CD4-positive, alpha-beta memory T cell (primary cell): ENCODE measurements at regions of chr14 and their contacts with region 1.

Region 1: DNA sequence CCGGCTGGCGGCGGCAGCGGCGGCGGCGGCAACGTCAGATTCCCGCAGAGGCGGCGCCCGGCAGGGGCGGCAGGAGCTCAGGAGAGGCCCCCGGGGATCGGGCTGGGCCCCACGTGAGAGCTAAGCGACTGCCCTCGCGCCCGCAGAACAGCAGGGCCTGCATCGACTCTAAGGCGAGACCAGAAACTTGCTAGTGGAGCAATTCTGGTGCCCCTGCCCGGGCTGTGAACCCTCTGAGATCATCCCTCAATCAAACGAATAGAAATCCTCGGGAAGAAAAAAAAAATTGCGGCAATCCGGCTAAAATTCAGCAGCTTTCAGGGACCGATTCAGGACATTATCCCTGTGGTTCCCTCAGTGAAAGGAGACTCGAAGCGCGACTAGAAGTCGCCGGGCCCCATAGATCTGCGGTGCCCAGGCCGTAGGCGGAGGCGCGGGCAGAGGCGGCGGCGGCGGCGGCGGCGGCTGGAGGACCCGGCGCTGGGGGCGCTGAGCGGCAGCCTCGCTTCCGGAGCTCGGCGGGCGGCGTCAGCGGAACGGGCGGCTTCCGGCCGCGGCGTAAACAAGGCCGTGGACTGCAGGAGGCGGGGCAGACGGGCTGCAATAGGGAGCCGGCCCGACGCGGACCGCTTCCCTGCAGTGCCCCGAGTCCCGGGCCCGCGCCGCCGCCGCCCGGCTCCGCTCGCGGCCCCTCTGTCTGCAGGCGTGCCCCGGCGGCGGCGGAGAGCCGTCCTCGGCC is at the start of gene KLHDC2:
- DNase-seq: peak; percentile 87 to 90 (median 89)
- H3K4me3 ChIP-seq: peak within 1 kb of the TSS; percentile 81 to 97
- H3K4me3 Mint-ChIP-seq: peak within 1 kb of the TSS; percentile 94 to 99 (median 98)
- H3K27ac ChIP-seq: peak within 1 kb of the TSS; percentile 95
- H3K27ac Mint-ChIP-seq: peak within 1 kb of the TSS; percentile 99 to 100 (median 99)
- H3K4me1 ChIP-seq: peaks cover 30% of the 10 kb centered on the region
- H3K4me1 Mint-ChIP-seq: peaks cover 19 to 45% (median 28%) of the 10 kb centered on the region in 4 donors
- H3K27me3 ChIP-seq: no peaks in the 10 kb centered on the region
- H3K27me3 Mint-ChIP-seq: peaks cover 0 to 1% of the 10 kb centered on the region in 2 donors
- total RNA-seq, gene KLHDC2: 84.0 to 86.4 TPM

Region 2: GRCh38 chr14:49585803-49586672 is 181.7 kb before region 1 on chr14 and contains the start of gene RPS29:
- CTCF ChIA-PET with region 1: interaction called, 4 read pairs
- POLR2A ChIA-PET with region 1: interaction called, 51 read pairs
- intact Hi-C with region 1: loop called (anchors 1 kb)
- DNase-seq: peak; percentile 98 to 99 (median 99)
- H3K4me3 ChIP-seq: peak within 1 kb of the TSS; percentile 93 to 98
- H3K4me3 Mint-ChIP-seq: peak within 1 kb of the TSS; percentile 87 to 98 (median 95)
- H3K27ac ChIP-seq: peak within 1 kb of the TSS; percentile 95
- H3K27ac Mint-ChIP-seq: peak within 1 kb of the TSS; percentile 88 to 100 (median 99)
- H3K4me1 ChIP-seq: peaks cover 38% of the 10 kb centered on the region
- H3K4me1 Mint-ChIP-seq: peaks cover 29 to 62% (median 42%) of the 10 kb centered on the region in 4 donors
- H3K27me3 ChIP-seq: no peaks in the 10 kb centered on the region
- H3K27me3 Mint-ChIP-seq: peaks cover 0 to 4% of the 10 kb centered on the region in 2 donors
- total RNA-seq, gene RPS29: 3,602 to 3,749 TPM

Region 3: DNA sequence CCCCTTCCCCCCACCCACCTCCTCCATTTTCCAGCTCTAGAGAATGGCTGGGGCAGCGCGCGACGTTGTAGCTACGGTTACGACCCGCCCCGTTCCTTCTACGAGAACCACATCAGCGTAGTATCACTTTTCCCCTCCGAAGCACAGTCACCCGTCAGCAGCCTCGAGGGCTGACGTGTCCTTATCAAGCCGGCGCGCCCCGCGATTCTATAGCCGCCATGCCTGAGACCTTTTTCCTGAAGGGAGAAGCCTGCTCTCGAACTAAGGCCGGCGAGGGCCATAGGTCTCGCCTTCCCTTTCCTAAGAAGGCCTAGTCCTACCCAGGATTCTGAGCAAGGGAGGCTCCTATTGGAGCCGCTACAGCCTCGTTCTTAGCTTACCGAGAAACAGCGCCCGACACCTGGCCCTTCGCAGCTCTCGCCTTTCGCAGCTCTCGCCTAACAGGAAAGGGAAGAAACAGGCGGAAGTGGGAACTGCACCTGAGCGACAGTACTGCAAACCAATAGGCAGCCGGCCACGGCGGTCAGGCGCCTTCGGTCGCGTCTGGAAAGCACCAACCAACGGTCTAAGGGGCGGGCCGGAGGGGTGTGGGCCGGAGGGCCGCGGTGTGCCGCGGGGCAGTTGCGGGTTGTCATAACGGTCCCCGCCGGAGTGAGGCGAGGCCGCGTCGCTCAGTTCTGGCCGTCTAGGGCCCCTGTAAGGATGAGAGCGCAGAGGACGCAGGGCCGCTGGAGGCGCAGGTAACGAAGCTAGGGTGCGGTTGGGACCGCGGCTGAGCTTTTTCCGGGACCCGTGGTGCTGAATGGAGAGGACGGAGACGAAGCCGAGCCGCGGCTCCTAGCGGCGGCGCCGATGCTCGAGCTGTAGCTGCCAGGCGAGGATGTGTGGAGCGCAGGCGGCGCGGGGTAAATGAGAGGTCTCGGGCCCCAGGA is 147.3 kb before region 1 on chr14 and contains the starts of genes MGAT2 and RPL36AL:
- CTCF ChIA-PET with region 1: interaction called, 6 read pairs
- POLR2A ChIA-PET with region 1: interaction called, 86 read pairs
- intact Hi-C with region 1: loop called (anchors 1 kb)
- DNase-seq: peak; percentile 95 to 97 (median 96)
- H3K4me3 ChIP-seq: peak within 1 kb of the TSS; percentile 99 to 100
- H3K4me3 Mint-ChIP-seq: peak within 1 kb of the TSS; percentile 95 to 99 (median 96)
- H3K27ac ChIP-seq: peak within 1 kb of the TSS; percentile 98
- H3K27ac Mint-ChIP-seq: peak within 1 kb of the TSS; percentile 98 to 100 (median 99)
- H3K4me1 ChIP-seq: peaks cover 65% of the 10 kb centered on the region
- H3K4me1 Mint-ChIP-seq: peaks cover 34 to 69% (median 43%) of the 10 kb centered on the region in 4 donors
- H3K27me3 ChIP-seq: no peaks in the 10 kb centered on the region
- H3K27me3 Mint-ChIP-seq: no peaks in the 10 kb centered on the region
- total RNA-seq, gene MGAT2: 58.5 to 58.7 TPM
- total RNA-seq, gene RPL36AL: 416 to 441 TPM

Region 4: GRCh38 chr14:49692811-49693734 is 74.7 kb before region 1 on chr14 and contains the start of gene KLHDC1:
- CTCF ChIA-PET with region 1: interaction called, 6 read pairs
- POLR2A ChIA-PET with region 1: interaction called, 45 read pairs
- intact Hi-C with region 1: loop called (anchors 1 kb)
- DNase-seq: peak; percentile 77 to 83 (median 79)
- H3K4me3 ChIP-seq: peak within 1 kb of the TSS; percentile 49 to 72
- H3K4me3 Mint-ChIP-seq: peak within 1 kb of the TSS; percentile 87 to 99 (median 90)
- H3K27ac ChIP-seq: peak within 1 kb of the TSS; percentile 64
- H3K27ac Mint-ChIP-seq: peak within 1 kb of the TSS; percentile 77 to 96 (median 93)
- H3K4me1 ChIP-seq: peaks cover 23% of the 10 kb centered on the region
- H3K4me1 Mint-ChIP-seq: peaks cover 23 to 38% (median 25%) of the 10 kb centered on the region in 4 donors
- H3K27me3 ChIP-seq: no peaks in the 10 kb centered on the region
- H3K27me3 Mint-ChIP-seq: no peaks in the 10 kb centered on the region
- total RNA-seq, gene KLHDC1: 12.9 to 13.6 TPM

Region 5: DNA sequence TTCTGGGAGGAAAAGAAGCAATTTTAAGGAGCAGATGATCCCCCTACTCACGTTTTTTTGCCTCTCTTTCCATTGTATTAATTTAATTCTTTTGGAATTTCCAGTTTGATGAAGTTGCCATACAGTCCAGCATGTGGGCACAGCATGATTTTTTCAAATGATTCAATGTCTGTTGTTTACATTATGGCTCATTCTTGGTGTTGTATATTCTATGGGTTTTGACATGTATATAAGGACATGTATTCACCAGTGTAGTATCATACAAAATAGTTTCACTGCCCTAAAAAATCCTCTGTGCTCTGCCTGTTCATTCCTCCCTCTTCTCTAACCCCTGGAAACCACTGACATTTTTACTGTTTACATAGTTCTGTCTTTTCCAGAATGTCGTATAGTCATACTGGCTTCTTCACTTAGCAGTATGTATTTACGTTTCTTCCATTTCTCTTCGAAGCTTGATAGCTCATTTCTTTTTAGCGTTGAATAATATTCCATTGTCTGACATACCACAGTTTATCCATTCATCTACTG is 13.1 kb before region 1 on chr14:
- CTCF ChIA-PET with region 1: no interaction called
- POLR2A ChIA-PET with region 1: no interaction called
- intact Hi-C with region 1: no loop called
- DNase-seq: no peak
- H3K4me3 ChIP-seq: no peak overlapping the region
- H3K4me3 Mint-ChIP-seq: no peak overlapping the region
- H3K27ac ChIP-seq: no peak overlapping the region
- H3K27ac Mint-ChIP-seq: no peak overlapping the region
- H3K4me1 ChIP-seq: no peaks in the 10 kb centered on the region
- H3K4me1 Mint-ChIP-seq: peaks cover 0 to 1% (median 0%) of the 10 kb centered on the region in 4 donors
- H3K27me3 ChIP-seq: no peaks in the 10 kb centered on the region
- H3K27me3 Mint-ChIP-seq: no peaks in the 10 kb centered on the region

Region 6: DNA sequence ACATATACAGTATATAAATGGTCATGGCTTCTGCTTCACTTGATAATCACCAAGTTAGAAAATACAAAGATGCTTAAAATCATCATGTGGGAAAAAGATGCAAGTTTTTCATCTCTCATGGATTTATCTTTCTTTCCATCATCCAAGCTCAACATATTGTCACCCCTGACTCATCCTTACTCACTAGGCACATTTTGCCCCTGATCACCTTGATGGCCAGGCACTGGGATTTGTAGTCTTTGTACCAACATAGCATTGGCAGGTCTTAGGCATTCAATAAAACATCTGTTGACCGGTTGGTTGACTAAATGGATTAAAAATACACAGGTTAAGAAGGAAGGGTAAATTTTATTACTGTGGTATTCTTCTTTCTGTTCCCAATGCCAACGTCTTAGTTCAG is 28.3 kb after region 1 on chr14:
- CTCF ChIA-PET with region 1: interaction called, 3 read pairs
- POLR2A ChIA-PET with region 1: interaction called, 12 read pairs
- intact Hi-C with region 1: no loop called
- DNase-seq: no peak
- H3K4me3 ChIP-seq: no peak overlapping the region
- H3K4me3 Mint-ChIP-seq: no peak overlapping the region
- H3K27ac ChIP-seq: no peak overlapping the region
- H3K27ac Mint-ChIP-seq: peak overlapping the region in 4 of 7 donors; percentile 11 to 70 (median 56)
- H3K4me1 ChIP-seq: no peaks in the 10 kb centered on the region
- H3K4me1 Mint-ChIP-seq: peaks cover 0 to 4% (median 2%) of the 10 kb centered on the region in 4 donors
- H3K27me3 ChIP-seq: no peaks in the 10 kb centered on the region
- H3K27me3 Mint-ChIP-seq: no peaks in the 10 kb centered on the region

Region 7: DNA sequence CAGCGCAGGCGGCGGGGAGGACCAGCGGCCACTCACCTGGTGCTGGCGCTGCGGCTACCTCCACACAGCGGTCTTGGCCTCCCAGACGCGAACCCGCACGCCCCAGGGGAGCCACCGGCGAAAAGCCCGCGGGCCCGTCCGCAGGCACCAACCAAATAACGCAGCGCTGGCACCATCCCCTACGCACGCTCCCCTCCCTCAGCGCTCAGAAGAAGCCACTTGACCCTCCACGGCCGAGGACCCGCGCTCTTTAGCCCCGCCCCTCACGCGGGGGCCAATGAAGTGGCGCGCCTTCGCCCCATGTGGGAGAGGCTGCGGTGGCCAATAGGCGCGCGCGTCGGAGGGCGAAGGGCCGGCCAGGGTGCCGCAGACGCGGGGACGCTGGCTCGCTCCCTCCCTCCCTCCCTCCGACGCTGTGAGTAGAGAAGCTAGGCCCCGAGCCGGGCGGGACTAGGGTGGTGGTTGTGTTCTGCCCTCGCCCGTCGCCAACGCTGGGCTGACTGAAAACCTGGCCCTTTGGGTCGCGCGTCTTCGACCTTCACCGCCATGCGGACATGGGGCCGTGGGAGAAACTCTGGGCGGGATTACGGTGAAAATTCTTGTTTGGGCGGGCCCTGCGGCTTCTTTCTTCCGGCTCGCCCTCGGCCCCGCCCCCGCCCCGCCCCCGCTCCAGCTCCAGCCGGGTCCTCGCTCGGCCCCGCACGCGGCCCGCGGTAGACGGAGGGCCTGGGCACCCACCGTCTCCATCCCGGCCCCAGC is 544.4 kb after region 1 on chr14 and contains the starts of genes DMAC2L and L2HGDH:
- CTCF ChIA-PET with region 1: no interaction called
- POLR2A ChIA-PET with region 1: interaction called, 15 read pairs
- intact Hi-C with region 1: loop called (anchors 5 kb)
- DNase-seq: peak; percentile 86 to 91 (median 89)
- H3K4me3 ChIP-seq: peak within 1 kb of the TSS; percentile 77 to 92
- H3K4me3 Mint-ChIP-seq: peak within 1 kb of the TSS; percentile 91 to 98 (median 97)
- H3K27ac ChIP-seq: peak within 1 kb of the TSS; percentile 76
- H3K27ac Mint-ChIP-seq: peak within 1 kb of the TSS; percentile 92 to 99 (median 99)
- H3K4me1 ChIP-seq: peaks cover 30% of the 10 kb centered on the region
- H3K4me1 Mint-ChIP-seq: peaks cover 30 to 47% (median 34%) of the 10 kb centered on the region in 4 donors
- H3K27me3 ChIP-seq: no peaks in the 10 kb centered on the region
- H3K27me3 Mint-ChIP-seq: no peaks in the 10 kb centered on the region
- total RNA-seq, gene DMAC2L: 15.9 to 19.5 TPM
- total RNA-seq, gene L2HGDH: 4.9 to 5.5 TPM